Spleen (tissue), 13 donors: ENCODE measurements at regions of chr19 and their contacts with region 1.

Region 1: GRCh38 chr19:47608074-47608918 is 638 bp upstream of the BICRA start:
- DNase-seq: peak; percentile 98
- H3K4me3 ChIP-seq: peak overlapping the region; percentile 78 to 99 (median 90)
- H3K27ac ChIP-seq: peak overlapping the region; percentile 91 to 99 (median 97)
- H3K4me1 ChIP-seq: peaks cover 19 to 55% (median 38%) of the 10 kb centered on the region in 6 donors
- H3K27me3 ChIP-seq: peaks cover 0 to 8% (median 0%) of the 10 kb centered on the region in 7 donors
- CTCF ChIP-seq: peak in 7 of 11 experiments; percentile 34 to 58 (median 48)
- POLR2A ChIP-seq: peak; percentile 15 to 78 (median 47)

Region 2: DNA sequence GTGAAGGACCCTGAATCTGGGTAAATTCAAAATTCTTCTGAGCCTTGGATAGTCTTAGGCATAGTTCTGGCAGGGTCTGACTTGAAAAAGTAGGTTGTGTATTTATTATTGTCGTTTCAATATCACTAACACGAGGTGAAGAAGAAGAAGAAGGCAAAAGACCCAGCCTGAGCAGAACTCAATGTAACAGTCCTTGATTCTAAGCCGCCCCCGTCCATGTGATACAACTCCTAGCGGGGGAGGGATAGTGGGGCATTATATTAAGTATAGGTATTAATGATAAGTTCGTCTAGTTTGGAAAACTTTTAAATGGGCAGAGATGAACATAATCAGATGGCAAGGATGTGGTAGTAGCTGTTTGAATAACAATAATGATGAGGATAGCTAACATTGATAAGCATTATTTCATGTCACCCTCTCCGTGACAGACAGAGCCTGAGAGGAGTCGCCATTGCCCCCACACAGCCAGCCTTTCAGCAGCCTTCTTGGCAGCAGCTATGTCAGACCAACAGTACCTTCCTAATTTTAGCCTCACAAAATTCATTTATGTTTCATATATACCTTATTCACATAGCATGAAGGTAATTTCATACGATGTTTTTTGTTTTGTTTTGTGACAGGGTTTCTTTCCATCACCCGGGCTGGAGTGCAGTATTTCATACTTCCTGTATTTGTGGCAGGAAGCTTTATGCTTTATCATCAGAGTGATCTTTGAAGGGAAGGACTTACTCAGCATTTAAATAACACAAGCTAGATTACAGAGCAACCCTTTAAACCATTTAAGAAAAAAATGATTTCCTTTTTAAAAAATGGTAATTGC is 653.1 kb before region 1 on chr19:
- intact Hi-C with region 1: no loop called
- DNase-seq: no peak
- H3K4me3 ChIP-seq: peak overlapping the region in 6 of 8 donors; percentile 15 to 63 (median 26)
- H3K27ac ChIP-seq: peak overlapping the region; percentile 7 to 89 (median 80)
- H3K4me1 ChIP-seq: peaks cover 23 to 98% (median 64%) of the 10 kb centered on the region in 6 donors
- H3K27me3 ChIP-seq: no peaks in the 10 kb centered on the region
- CTCF ChIP-seq: no peak
- POLR2A ChIP-seq: no peak

Region 3: GRCh38 chr19:47340477-47341208 is 267.7 kb before region 1 on chr19:
- intact Hi-C with region 1: no loop called
- DNase-seq: no peak
- H3K4me3 ChIP-seq: no peak overlapping the region
- H3K27ac ChIP-seq: no peak overlapping the region
- H3K4me1 ChIP-seq: peaks cover 0 to 35% (median 13%) of the 10 kb centered on the region in 6 donors
- H3K27me3 ChIP-seq: no peaks in the 10 kb centered on the region
- CTCF ChIP-seq: no peak
- POLR2A ChIP-seq: no peak

Region 4: GRCh38 chr19:47514869-47515588 is 93.3 kb before region 1 on chr19 and contains the start of gene NAPA:
- intact Hi-C with region 1: loop called (anchors 5 kb)
- DNase-seq: peak; percentile 100
- H3K4me3 ChIP-seq: peak within 1 kb of the TSS; percentile 70 to 96 (median 85)
- H3K27ac ChIP-seq: peak within 1 kb of the TSS; percentile 91 to 98 (median 95)
- H3K4me1 ChIP-seq: peaks cover 43 to 88% (median 67%) of the 10 kb centered on the region in 6 donors
- H3K27me3 ChIP-seq: peaks cover 0 to 4% (median 0%) of the 10 kb centered on the region in 7 donors
- CTCF ChIP-seq: no peak
- POLR2A ChIP-seq: peak; percentile 9 to 60 (median 24)
- total RNA-seq, gene NAPA: 85.8 to 171 (median 98.1) TPM